ENCODE measurements at regions of chr1 and their contacts with region 1.

Region 1: GRCh38 chr1:212284744-212285684 is at the start of gene PPP2R5A:
- DNase-seq: peak; percentile 97 to 100 (median 99)

Region 2: GRCh38 chr1:212035123-212035834 is 249.7 kb before region 1 on chr1 and contains the starts of genes DTL and INTS7:
- intact Hi-C with region 1: loop called (anchors 1 kb)
- DNase-seq: peak; percentile 96 to 100 (median 98)

Region 3: DNA sequence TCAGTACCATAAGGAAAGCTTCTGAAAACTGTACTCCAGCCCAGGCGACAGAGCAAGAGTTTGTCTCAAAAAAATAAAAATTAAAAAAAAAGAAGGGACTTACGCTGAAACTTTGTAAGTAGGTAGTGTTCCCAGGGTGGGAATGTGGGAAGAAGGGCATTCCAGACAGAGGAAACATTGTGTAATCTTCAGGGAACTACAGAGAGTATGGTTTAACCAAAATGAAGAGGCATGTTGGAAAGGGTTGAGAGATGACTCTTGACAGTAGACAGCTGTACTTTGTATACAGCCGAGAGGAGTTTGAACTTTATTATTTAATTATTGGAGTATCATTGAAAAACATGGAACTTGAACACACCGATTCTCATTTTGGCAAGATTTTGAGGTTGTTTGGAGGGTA is 43.2 kb after region 1 on chr1:
- intact Hi-C with region 1: no loop called
- DNase-seq: no peak

Region 4: GRCh38 chr1:212368073-212368484 is 83.1 kb after region 1 on chr1:
- intact Hi-C with region 1: loop called (anchors 5 kb)
- DNase-seq: peak in 2 of 10 donors; percentile 22 to 43

Region 5: DNA sequence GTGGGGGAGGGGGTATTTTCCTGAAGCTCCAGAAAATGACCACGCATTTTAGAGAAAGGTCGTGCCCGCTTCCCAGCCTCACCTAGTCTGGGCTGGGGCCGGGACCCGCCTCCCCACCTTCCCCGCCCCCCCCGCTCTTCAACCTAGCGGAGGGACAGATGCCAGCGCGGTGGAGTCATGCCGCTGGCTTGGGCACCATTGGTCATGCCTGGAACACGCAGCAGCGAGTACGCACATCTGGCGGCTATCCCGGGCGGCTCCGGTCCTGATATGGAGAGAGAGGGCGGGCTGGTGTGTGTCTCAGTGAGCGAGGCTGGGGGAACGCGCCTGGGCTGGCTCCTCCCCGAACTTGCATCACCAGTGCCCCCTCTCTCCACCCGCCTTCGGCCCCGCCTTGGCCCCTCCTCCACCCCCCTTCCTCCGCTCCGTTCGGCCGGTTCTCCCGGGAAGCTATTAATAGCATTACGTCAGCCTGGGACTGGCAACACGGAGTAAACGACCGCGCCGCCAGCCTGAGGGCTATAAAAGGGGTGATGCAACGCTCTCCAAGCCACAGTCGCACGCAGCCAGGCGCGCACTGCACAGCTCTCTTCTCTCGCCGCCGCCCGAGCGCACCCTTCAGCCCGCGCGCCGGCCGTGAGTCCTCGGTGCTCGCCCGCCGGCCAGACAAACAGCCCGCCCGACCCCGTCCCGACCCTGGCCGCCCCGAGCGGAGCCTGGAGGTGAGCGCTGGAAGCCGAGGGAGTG is 323.4 kb after region 1 on chr1 and contains the start of gene ATF3:
- intact Hi-C with region 1: loop called (anchors 5 kb)
- DNase-seq: peak; percentile 95 to 100 (median 98)

Measured in posterior cingulate gyrus (tissue), 11 donors.